Posterior vena cava (tissue), 2 donors: ENCODE measurements at regions of chr14 and their contacts with region 1.

Region 1: DNA sequence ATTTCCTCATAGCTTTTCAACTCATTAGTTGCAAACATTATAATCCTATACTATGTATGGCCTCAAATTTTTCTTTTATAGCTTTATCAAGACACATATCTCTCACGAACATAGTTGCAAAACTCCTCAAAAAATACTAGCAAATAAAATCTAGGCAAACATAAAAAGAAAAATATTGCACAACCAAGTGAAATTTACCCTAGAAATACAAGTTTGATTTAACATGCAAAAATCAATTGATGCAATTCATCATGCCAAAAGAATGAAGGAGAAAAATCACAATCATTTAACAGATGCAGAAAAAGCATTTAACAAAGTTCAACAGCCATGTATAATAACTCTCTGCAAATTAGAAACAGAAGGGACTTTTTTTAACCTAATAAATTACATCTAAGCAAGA is 33.3 kb upstream of the KCNH5 start:
- DNase-seq: no peak

Region 2: GRCh38 chr14:63051966-63052365 is 26.6 kb before region 1 on chr14:
- intact Hi-C with region 1: no loop called
- DNase-seq: no peak

Region 3: DNA sequence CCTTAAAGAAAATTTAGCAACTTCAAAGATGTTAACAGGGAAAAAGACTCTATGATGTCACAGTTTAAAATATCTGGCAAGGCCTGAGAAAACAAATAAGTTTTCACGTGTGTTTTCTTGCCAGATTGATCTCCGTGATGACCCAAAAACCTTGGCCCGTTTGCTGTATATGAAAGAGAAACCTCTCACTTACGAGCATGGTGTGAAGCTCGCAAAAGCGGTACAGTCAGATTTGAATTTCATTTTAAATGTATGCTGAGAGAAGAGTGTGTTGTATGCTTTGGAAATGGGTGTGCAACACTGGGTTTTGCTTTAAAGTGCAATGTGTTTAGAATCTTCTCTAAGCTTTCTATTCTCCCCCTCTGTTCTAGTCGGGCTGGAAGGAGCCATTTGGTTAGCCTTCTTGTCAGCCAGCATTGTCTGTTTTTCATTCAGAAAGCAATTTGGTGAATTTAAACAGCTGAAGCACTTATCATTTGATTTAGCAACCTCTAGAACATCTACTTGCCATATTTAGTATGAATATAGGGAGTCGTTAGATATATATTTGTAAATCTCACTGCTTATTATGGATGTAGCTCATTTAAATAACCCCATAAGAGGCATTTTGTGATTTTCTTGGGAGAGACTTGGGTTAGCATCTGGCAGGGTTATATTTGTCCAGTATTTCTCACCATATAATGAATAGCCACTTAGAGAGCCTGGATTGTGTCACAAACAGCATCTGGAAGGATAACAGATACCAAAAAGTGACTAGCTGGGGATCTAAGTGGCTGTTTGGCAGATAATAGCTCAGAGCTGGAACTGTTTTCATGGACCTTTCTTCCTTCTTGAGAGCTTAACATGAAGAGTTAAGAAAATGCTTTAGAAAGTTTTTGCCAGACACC is 204.7 kb after region 1 on chr14:
- intact Hi-C with region 1: loop called in 1 of 2 experiments (anchors 5 kb)
- DNase-seq: no peak